Activated naive CD4-positive, alpha-beta T cell treated with anti-CD3 and anti-CD28 coated beads for 36 hours (primary cell): ENCODE measurements at regions of chr5 and their contacts with region 1.

Region 1: DNA sequence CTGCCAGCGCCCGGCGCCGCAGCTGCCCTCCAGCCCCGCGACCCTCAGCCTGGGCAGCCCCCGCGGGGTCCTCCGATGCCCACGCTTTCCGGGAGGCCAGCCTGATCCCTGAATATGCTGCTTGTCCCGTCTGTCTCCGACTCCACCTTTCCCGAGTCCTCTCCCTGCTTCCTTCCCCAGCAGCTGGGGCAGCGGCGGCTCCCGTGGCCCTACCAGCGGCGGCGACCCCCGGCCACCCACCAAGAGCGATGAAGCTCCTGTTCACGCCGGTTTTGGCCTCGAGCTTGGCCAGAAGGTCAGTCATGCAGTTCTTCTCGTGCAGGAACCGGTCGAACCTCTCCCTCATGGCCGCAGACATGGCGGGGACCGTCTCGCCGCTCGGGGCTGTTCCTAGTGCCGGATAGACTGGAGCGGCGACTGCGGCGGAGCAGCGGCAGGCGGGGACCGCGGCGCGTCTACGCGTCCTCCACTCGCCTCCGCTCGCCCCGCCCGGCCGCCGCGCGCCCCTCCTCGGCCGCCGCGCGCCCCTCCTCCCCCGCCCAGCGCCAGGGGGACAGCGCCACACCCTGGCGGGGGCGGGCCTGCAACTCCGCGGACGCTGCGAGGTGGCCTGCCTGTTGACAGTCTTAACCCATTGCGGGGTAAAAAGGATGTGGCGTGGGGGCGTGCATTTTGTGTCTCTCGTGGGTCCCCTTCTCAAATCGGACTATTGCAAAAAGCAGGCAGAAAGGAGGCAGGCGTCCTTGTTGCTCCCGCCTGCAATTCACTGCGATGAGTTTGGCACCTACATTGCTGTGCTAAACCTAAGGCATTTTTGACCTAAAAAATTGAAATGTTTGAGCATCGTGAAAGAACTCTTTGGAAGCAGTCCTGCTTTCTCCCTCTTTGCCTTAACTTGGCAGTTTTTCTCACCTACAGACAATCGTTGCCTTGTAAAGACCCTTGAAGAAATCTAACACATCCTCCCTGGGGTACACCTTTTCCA is at the start of gene REEP5:
- DNase-seq: peak; percentile 76
- H3K4me3 Mint-ChIP-seq: peak within 1 kb of the TSS; percentile 90
- H3K27ac Mint-ChIP-seq: peak within 1 kb of the TSS; percentile 81
- H3K4me1 Mint-ChIP-seq: peaks cover 45% of the 10 kb centered on the region
- H3K27me3 Mint-ChIP-seq: no peaks in the 10 kb centered on the region
- total RNA-seq, gene REEP5: 18.3 to 18.8 TPM

Region 2: DNA sequence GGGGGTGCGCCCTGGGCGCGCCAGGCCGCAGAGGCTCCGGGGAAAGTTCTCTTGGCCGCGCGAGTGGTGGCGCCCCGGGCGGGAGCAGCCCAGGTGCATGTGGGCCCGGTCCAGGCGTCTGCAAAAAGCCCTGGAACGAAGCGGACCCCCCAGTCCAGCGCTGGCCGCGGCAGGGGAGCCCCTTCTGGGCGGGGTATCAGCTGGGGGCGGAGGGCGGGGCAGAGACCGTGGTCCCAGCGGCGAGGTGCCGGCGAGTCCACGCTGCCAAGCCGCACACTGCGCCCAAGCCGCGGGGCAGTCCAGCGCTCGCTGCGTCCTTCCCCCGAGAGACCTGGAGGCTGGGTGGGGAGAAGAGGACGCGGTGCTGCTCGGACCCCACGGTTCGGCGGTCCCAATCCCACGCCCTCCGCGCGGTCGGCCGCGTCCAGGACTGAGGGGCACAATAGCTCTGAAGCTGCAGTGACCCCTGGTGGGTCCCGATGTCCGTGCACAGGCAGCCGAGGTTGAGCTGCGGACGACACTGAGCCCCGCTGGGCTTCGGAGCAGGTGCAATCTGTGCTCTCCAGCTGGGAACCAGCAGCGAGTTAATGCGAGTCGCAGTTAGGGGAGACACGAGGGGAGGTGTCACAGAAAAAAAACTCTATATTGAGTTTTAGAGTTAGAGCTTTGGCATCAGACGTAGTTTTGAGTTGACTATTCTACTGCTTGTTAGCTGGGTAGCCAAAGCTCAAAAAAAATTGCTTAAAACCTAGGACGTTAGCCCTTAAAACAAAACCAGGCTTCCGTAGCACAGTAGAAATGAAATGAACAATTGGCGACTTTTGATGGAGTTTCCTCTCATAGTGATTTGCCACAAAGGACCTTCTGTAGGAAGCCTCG is 501.9 kb before region 1 on chr5:
- CTCF ChIA-PET with region 1: no interaction called
- intact Hi-C with region 1: loop called (anchors 10 kb)
- DNase-seq: peak; percentile 60
- H3K4me3 Mint-ChIP-seq: peak overlapping the region; percentile 56
- H3K27ac Mint-ChIP-seq: no peak overlapping the region
- H3K4me1 Mint-ChIP-seq: peaks cover 10% of the 10 kb centered on the region
- H3K27me3 Mint-ChIP-seq: peaks cover 45% of the 10 kb centered on the region

Region 3: DNA sequence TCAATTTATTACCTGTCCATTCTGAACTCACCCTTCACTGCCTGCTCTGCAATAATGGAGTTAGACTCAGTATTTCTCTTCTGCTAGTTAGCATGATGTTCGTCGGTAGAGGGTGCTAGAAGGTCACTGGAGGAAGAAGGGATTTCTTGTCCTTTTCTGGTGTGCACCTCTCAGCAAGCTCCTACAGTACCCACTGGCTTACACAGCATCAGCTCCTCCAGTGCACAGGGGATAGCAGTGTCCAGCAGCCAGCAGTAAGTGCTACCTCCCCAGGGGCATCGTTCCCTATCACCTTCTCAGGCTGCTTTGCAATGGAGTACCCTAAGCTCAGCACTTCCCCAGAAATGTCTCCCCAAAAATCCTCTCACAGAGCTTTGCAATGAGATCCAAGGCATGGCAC is 230.4 kb before region 1 on chr5:
- CTCF ChIA-PET with region 1: interaction called, 6 read pairs
- intact Hi-C with region 1: loop called (anchors 1 kb)
- DNase-seq: peak; percentile 63
- H3K4me3 Mint-ChIP-seq: no peak overlapping the region
- H3K27ac Mint-ChIP-seq: no peak overlapping the region
- H3K4me1 Mint-ChIP-seq: no peaks in the 10 kb centered on the region
- H3K27me3 Mint-ChIP-seq: peaks cover 4% of the 10 kb centered on the region

Region 4: DNA sequence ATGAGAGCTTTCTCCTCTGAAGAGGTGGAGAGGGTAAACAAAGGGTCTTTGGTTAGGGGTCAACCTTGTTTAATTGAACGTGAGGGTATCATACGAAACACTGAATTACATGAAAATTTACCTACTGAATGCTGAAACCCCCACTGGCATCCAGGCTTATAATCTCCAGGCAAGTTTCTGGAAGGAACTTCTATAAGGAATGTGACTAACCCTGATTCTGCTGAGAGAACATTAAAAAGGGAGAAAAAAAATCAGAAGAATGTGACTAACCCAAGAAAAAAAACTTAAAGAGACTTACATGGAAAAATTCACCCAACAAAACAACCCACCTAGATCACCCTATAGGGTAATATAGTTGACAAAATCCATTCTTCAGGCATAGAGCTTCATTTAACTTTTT is 128.9 kb before region 1 on chr5:
- CTCF ChIA-PET with region 1: no interaction called
- intact Hi-C with region 1: loop called (anchors 5 kb)
- DNase-seq: no peak
- H3K4me3 Mint-ChIP-seq: no peak overlapping the region
- H3K27ac Mint-ChIP-seq: no peak overlapping the region
- H3K4me1 Mint-ChIP-seq: no peaks in the 10 kb centered on the region
- H3K27me3 Mint-ChIP-seq: no peaks in the 10 kb centered on the region

Region 5: DNA sequence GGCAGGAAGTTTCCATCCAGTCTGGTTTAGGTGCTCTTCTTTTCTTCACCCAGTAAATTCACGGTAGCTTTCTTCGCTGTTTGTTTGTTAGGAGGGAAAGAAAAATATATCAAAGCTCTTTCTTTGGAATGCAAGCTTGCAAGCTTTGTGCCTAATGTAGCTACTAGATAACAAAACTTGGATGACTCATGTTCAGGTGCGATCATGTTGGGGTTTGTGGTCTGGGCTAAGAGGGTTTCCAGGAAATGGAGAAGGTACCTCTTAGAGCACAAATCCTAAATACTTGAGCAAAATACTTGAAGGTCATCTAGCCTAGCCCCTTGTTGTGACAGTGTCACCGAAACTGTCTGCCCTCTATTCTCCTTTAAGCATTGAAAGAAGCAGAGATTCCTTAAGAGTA is 43.4 kb before region 1 on chr5:
- CTCF ChIA-PET with region 1: interaction called, 5 read pairs
- intact Hi-C with region 1: loop called (anchors 2 kb)
- DNase-seq: peak; percentile 80
- H3K4me3 Mint-ChIP-seq: no peak overlapping the region
- H3K27ac Mint-ChIP-seq: peak overlapping the region; percentile 71
- H3K4me1 Mint-ChIP-seq: peaks cover 27% of the 10 kb centered on the region
- H3K27me3 Mint-ChIP-seq: no peaks in the 10 kb centered on the region

Region 6: DNA sequence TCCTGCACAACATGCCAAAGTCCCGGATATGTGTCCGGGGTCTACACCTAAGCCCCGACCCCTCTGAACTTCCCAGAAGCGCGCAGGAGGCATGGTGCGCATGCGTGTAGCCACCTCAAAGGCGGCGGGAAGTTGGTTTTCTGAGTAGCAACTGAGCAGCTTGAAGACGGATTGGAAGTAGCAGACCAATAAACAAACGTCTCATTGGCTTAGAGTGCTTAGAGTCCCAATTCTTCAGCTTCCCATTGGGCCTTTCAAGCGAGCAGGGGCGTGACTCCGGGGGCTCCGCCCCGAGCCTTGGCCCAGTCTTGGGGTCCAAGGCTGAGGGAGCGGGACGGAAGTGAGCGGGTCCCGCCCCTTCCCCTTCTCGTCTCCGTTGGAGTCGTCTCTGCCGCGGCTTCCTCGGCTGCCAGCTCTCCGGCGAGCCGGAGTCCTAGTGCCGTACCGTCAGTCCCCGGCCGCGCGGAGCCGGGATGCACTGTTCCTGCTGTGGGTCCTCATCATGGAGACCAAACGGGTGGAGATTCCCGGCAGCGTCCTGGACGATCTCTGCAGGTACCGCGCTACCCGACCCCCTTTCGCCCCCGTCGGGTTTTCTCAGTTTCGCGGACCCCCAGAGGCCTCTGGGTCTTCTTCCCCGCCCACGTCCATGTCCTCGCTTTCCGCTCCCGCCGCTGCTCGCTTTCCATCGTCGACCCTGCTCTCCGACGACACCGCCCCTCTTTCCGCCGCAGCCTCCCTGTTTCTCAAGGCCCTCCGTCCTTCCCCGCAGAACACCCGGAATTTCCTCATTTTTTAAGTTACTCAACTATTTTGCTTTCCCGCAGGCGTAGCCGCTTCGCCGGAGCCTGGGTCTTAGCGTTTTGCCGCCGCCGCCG is 54.5 kb after region 1 on chr5 and contains the start of gene DCP2:
- CTCF ChIA-PET with region 1: interaction called, 3 read pairs
- intact Hi-C with region 1: loop called (anchors 2 kb)
- DNase-seq: peak; percentile 96
- H3K4me3 Mint-ChIP-seq: peak within 1 kb of the TSS; percentile 96
- H3K27ac Mint-ChIP-seq: peak within 1 kb of the TSS; percentile 95
- H3K4me1 Mint-ChIP-seq: peaks cover 38% of the 10 kb centered on the region
- H3K27me3 Mint-ChIP-seq: no peaks in the 10 kb centered on the region
- total RNA-seq, gene DCP2: 129 TPM